ENCODE measurements at regions of chr1 and their contacts with region 1.

Region 1: DNA sequence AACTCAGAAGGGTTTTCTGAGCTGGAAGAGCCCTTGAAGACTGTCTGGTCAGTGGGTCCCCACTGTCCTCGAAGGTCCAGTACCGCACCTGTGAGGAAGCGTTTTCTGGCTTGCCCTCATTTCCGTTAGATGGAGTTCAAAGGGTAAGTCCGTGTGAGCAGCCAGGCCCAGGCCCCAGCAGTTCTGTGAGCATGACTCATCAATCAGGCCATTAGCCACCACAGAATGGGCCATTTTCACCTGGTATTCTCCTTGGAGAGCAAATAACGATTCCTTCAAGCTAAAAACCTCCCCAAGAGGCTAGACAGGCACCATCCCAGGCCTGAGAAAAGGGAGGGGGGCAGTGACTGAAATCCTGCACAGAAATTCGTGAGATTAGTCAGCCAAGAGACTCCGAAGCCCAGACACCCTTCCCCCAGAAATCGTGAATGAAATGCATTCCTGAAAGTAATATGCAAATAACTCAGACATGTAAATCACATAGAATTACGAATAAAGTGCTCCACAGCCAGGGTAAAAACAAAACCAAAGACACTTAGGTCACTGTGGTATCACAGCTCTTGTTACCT is 66.0 kb downstream of the BCAR3 start:
- DNase-seq: peak; percentile 33 to 57
- H3K4me3 ChIP-seq: peak overlapping the region; percentile 3; the same call in 1 of the 2 replicates
- H3K27ac ChIP-seq: peak overlapping the region; percentile 81
- H3K4me1 ChIP-seq: peaks cover 77% of the 10 kb centered on the region
- H3K27me3 ChIP-seq: no peaks in the 10 kb centered on the region
- CTCF ChIP-seq: no peak

Region 2: GRCh38 chr1:93179886-93180722 is 435.6 kb before region 1 on chr1 and contains the start of gene TMED5:
- CTCF ChIA-PET with region 1: no interaction called
- POLR2A ChIA-PET with region 1: no interaction called
- intact Hi-C with region 1: loop called (anchors 2 kb)
- DNase-seq: peak; percentile 97 to 98
- H3K4me3 ChIP-seq: peak within 1 kb of the TSS; percentile 86
- H3K27ac ChIP-seq: peak within 1 kb of the TSS; percentile 98
- H3K4me1 ChIP-seq: peaks cover 51% of the 10 kb centered on the region
- H3K27me3 ChIP-seq: no peaks in the 10 kb centered on the region
- CTCF ChIP-seq: peak; percentile 38; the same call in 1 of the 2 replicates
- total RNA-seq, gene TMED5: 45.6 and 51.0 TPM in 2 replicates

Region 3: GRCh38 chr1:93585059-93585966 is 30.4 kb before region 1 on chr1:
- CTCF ChIA-PET with region 1: no interaction called
- POLR2A ChIA-PET with region 1: interaction called, 5 read pairs
- intact Hi-C with region 1: loop called (anchors 1 kb)
- DNase-seq: peak; percentile 99 to 100
- H3K4me3 ChIP-seq: peak overlapping the region; percentile 33; the same call in 1 of the 2 replicates
- H3K27ac ChIP-seq: peak overlapping the region; percentile 83
- H3K4me1 ChIP-seq: peaks cover 98% of the 10 kb centered on the region
- H3K27me3 ChIP-seq: no peaks in the 10 kb centered on the region
- CTCF ChIP-seq: no peak

Region 4: DNA sequence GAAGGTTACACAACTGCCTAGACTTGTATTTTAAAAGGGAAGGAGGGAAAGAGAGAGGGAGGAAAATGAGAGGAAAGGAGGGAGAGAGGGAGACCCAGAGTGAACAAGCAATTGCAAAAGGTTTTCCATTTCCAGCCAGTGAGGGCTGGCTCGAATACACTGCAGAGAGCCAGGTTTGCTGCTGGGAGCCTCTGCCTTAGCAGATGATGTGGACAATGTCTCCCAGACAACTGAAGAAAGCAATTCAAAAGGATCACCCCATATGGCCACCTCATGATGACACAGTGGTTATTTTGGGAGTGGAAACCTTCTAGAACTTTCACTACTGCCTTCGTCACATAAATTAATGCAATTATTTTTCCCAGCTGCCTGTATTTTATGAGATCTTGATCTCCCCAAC is 20.4 kb before region 1 on chr1:
- CTCF ChIA-PET with region 1: interaction called, 11 read pairs
- POLR2A ChIA-PET with region 1: no interaction called
- intact Hi-C with region 1: no loop called
- DNase-seq: no peak
- H3K4me3 ChIP-seq: no peak overlapping the region
- H3K27ac ChIP-seq: peak overlapping the region; percentile 13
- H3K4me1 ChIP-seq: peaks cover 44% of the 10 kb centered on the region
- H3K27me3 ChIP-seq: no peaks in the 10 kb centered on the region
- CTCF ChIP-seq: no peak

Region 5: DNA sequence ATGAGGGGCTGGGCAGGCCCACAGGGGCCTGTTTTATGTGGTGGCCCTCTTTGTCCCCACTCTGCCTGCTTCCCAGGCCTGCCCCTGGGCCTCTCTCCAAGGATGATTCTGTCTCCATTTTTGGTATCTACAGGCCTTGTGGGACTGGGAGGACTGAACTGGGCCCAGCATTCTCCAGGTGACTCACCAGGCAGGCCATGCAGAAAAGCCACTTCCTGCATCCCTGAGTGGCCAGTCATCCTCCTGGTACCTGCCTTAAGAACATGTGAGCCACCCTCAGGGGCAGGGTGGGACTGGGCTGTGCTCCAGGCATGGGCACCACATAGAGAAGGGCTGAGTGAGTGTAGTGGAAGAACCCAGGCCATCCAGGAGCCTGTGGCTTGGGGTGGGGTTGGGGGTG is 86.0 kb after region 1 on chr1:
- CTCF ChIA-PET with region 1: no interaction called
- POLR2A ChIA-PET with region 1: interaction called, 25 read pairs
- intact Hi-C with region 1: no loop called
- DNase-seq: peak; percentile 97 to 100
- H3K4me3 ChIP-seq: no peak overlapping the region
- H3K27ac ChIP-seq: peak overlapping the region; percentile 97
- H3K4me1 ChIP-seq: peaks cover 68% of the 10 kb centered on the region
- H3K27me3 ChIP-seq: no peaks in the 10 kb centered on the region
- CTCF ChIP-seq: no peak

Region 6: DNA sequence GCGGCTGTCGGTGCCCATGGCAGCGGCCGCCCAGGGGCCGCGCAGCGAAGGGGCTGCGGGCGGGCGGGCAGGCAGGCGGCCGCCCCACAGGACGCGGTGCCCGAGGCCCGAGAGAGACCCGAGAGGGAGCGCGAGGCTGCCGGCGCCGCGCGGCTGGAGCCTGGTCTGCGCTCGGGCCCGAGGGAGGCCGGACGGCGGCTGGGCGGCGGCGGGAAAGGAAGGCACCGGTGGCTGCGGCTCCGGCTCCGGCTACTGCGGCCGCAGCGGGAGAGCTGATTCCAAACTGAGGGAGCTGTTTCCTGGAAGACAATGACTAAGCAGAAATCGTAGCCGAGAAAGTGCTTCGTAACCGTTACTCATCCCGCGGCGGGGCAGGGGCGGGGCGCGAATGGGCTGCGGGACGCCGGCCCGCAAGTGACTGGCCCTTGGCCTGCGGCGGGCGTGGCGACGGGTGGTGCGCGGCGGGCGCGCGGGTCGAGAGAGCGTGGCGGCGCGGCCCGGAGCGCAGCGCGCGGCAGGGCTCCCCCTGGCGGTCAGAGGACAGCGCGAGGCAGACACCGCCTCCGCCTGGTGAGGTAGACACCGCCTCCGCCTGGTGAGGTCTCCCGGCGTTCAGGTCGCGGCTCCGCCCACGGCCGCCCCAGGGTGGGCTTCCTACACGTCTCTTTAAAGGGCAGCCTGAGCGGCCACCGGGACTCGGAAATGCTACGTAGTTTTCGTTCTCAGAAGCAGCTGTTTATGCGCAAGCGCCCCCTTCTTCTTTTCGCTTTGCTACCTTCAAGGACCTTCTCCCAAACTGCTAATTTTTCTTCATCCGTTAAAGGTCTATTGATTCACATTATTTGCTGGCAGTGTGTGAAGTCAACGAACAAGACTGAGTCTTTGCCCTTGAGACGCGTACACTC is 293.7 kb after region 1 on chr1 and contains the start of gene GCLM:
- CTCF ChIA-PET with region 1: no interaction called
- POLR2A ChIA-PET with region 1: no interaction called
- intact Hi-C with region 1: no loop called
- DNase-seq: peak; percentile 94 to 97
- H3K4me3 ChIP-seq: peak within 1 kb of the TSS; percentile 68
- H3K27ac ChIP-seq: peak within 1 kb of the TSS; percentile 80
- H3K4me1 ChIP-seq: peaks cover 32% of the 10 kb centered on the region
- H3K27me3 ChIP-seq: no peaks in the 10 kb centered on the region
- CTCF ChIP-seq: peak; percentile 80
- total RNA-seq, gene GCLM: 270 and 272 TPM in 2 replicates

Measured in PC-9 (cell line).